Heart right ventricle (tissue), 16 donors: ENCODE measurements at regions of chr22 and their contacts with region 1.

Region 1: GRCh38 chr22:24230911-24231656 is 13.8 kb downstream of the GGT5 start:
- DNase-seq: peak in 1 of 2 donors; percentile 62
- ATAC-seq: peak in 2 of 8 donors; percentile 33
- H3K4me3 ChIP-seq: no peak overlapping the region
- H3K27ac ChIP-seq: no peak overlapping the region
- H3K4me1 ChIP-seq: peaks cover 0 to 5% (median 3%) of the 10 kb centered on the region in 9 donors
- H3K27me3 ChIP-seq: no peaks in the 10 kb centered on the region
- CTCF ChIP-seq: peak in 7 of 9 donors; percentile 21 to 60 (median 33)

Region 2: GRCh38 chr22:24189249-24190158 is 41.6 kb before region 1 on chr22:
- intact Hi-C with region 1: loop called in 2 of 10 experiments (anchors 5 kb)
- DNase-seq: peak; percentile 73 to 76
- ATAC-seq: peak; percentile 83 to 95 (median 88)
- H3K4me3 ChIP-seq: no peak overlapping the region
- H3K27ac ChIP-seq: peak overlapping the region in 2 of 10 donors; percentile 1 to 36
- H3K4me1 ChIP-seq: peaks cover 0 to 17% (median 12%) of the 10 kb centered on the region in 9 donors
- H3K27me3 ChIP-seq: no peaks in the 10 kb centered on the region
- CTCF ChIP-seq: peak; percentile 87 to 95 (median 91)

Region 3: DNA sequence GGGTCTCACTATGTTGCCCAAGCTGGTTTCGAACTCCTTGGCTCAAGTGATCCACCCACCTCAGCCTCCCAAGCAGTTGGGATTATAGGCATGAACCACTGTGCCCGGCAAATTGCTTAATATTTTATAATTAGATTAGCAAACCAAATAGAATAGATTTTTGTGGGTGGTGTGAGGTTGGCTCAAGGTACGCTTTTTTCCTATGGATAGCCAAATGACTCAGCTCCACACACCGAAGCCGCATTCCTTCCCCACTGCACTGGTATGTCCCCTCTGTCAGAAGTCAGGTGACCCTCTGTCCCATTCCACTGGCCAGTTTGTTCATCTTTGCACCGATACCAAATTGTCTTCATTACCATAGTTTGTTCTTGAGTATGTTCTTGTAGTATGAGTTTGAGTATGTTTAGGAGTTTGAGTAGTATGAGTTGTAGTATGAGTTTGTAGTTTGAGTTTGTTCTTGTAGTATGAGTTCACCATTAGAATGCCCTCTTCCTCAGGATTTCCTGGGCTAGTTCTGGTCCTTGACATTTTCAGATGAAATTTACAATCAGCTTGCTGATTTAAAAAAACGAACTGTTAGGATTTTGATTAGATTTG is 30.4 kb before region 1 on chr22:
- intact Hi-C with region 1: loop called in 1 of 10 experiments (anchors 5 kb)
- DNase-seq: no peak
- ATAC-seq: no peak
- H3K4me3 ChIP-seq: no peak overlapping the region
- H3K27ac ChIP-seq: no peak overlapping the region
- H3K4me1 ChIP-seq: peaks cover 0 to 33% (median 5%) of the 10 kb centered on the region in 9 donors
- H3K27me3 ChIP-seq: no peaks in the 10 kb centered on the region
- CTCF ChIP-seq: no peak